ENCODE measurements at regions of chr2 and their contacts with region 1.

Region 1: GRCh38 chr2:231680992-231681853 is 27.1 kb upstream of the PTMA start:
- DNase-seq: no peak
- H3K4me3 ChIP-seq: peak overlapping the region in 2 of 3 experiments; percentile 43 to 44
- H3K27ac ChIP-seq: no peak overlapping the region
- H3K4me1 ChIP-seq: peaks cover 16% of the 10 kb centered on the region
- H3K27me3 ChIP-seq: no peaks in the 10 kb centered on the region
- CTCF ChIP-seq: no peak

Region 2: DNA sequence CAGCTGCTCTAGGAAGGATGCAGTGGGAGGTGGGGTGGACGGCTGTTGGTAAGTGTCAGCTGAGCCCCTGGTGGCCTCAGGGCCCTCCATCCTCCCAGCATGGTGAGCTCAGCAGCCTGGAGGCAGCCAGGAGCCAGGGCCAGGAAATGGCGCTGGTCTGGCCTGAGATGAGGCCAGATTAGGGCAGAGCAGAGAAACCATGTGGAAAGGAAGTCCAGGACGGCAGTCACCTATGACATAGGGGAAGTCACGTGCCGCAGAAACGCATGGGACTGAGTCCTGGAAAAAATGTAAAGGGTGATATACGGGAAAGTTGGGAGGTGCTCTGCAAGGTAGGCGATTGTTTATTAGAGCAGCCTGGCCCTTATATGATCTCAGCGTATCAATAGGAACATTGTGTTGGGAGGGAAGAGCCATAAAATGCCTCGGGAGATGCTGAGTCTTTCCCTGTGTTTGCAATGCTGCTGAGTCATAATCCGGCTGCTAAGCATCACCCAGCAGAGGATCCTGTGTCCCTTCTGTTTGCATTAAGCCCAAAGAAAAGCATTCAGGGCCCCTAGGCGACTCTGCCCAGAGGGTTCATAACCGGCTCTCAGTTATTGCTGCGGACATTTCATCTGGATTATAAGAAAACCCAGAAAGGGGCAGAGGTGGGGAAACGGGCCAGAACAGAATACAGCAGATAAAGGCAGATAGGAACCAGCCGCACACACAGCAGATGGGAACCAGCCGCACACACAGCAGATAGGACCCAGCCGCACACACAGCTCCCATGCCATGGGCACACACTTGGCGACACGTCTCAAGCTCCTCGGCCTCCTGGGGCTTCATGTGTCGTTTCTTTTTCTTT is 316.0 kb before region 1 on chr2:
- CTCF ChIA-PET with region 1: no interaction called
- dilution Hi-C with region 1: no loop called
- in situ Hi-C with region 1: no loop called
- intact Hi-C with region 1: no loop called
- DNase-seq: peak; percentile 92
- H3K4me3 ChIP-seq: no peak overlapping the region
- H3K27ac ChIP-seq: peak overlapping the region; percentile 73
- H3K4me1 ChIP-seq: peaks cover 15% of the 10 kb centered on the region
- H3K27me3 ChIP-seq: no peaks in the 10 kb centered on the region
- CTCF ChIP-seq: no peak

Region 3: DNA sequence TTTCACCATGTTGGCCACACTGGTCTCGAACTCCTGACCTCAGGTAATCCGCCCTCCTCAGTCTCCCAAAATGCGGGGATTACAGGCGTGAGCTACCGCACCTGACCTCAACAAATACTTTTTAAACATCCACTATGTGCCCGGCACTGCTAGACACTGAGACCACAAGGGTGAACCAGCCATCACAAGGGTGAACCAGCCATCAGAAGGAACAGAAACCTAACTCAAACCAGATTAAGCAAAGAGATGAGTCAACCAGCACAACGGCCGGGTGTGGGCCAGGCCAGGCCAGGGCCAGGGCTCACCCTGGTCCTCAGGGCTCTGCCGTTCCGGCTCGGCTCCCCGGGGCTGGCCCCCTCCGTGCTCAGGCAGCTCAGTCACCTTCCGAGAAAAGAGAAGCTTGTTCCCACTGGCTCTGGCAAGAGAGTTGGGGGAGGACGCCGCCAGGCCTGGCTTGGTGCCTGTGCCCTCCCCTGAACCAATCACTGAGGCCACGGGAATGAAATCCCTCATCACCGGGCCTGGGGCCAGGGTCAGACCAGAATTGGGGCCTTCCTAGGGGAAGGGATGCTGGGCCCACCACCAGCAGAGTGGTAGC is 84.1 kb before region 1 on chr2:
- CTCF ChIA-PET with region 1: interaction called, 5 read pairs
- dilution Hi-C with region 1: loop called (anchors 5 kb)
- in situ Hi-C with region 1: no loop called
- intact Hi-C with region 1: no loop called
- DNase-seq: peak; percentile 25
- H3K4me3 ChIP-seq: no peak overlapping the region
- H3K27ac ChIP-seq: no peak overlapping the region
- H3K4me1 ChIP-seq: no peaks in the 10 kb centered on the region
- H3K27me3 ChIP-seq: no peaks in the 10 kb centered on the region
- CTCF ChIP-seq: no peak